ENCODE measurements at regions of chr1 and their contacts with region 1.

Region 1: DNA sequence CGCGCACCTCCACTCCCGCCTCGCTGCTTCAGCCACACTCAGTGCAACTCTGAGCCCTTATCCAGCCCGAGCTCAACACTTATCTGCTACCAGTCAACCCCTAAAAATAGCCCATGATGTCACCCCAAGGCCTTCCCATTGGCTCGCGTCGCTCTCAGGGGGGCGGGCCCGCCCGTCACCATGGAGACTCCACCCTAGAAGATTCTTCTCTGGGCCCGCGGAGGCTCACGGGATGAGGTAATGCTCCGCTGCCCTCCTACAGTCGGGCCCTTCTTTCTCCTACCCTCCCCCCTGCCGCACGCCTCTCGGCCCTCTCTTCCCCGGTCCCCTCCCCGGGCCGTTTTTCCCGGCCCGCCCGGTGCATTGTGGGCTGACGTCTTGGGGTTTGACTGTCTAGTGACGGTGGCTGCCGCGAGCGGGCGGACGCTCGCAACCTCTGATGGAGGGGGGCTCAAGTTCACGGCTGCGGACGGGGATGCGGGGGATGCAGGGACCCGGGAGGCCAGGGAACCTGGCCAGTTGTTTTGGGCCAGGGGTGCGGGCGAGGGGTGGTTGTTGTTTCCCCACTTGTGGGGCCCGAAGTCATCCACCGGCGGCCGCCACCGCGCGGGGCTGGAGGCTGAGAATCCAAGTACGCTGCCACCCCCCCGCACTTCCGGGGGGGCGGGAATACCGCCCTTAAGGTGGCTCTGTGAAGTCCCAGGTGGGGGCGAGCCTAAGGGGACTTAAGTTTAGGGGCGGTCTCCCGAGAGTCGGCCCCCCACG is at the start of gene JUN:
- DNase-seq: peak; percentile 100
- H3K4me3 ChIP-seq: peak within 1 kb of the TSS; percentile 77 to 91
- H3K27ac ChIP-seq: peak within 1 kb of the TSS; percentile 99 to 100
- H3K4me1 ChIP-seq: no peaks in the 10 kb centered on the region
- H3K27me3 ChIP-seq: no peaks in the 10 kb centered on the region
- CTCF ChIP-seq: peak in 3 of 4 experiments; percentile 36 to 50 (median 43)
- POLR2A ChIP-seq: peak; percentile 99
- total RNA-seq, gene JUN: 154 to 303 TPM

Region 2: GRCh38 chr1:58816072-58816746 is 32.0 kb after region 1 on chr1:
- intact Hi-C with region 1: loop called (anchors 5 kb)
- DNase-seq: peak; percentile 88
- H3K4me3 ChIP-seq: peak overlapping the region; percentile 49 to 59
- H3K27ac ChIP-seq: peak overlapping the region; percentile 90 to 93
- H3K4me1 ChIP-seq: peaks cover 19% of the 10 kb centered on the region
- H3K27me3 ChIP-seq: no peaks in the 10 kb centered on the region
- CTCF ChIP-seq: peak in 2 of 4 experiments; percentile 23 to 31
- POLR2A ChIP-seq: peak; percentile 37

Region 3: GRCh38 chr1:59025898-59026426 is 241.8 kb after region 1 on chr1:
- intact Hi-C with region 1: no loop called
- DNase-seq: no peak
- H3K4me3 ChIP-seq: no peak overlapping the region
- H3K27ac ChIP-seq: no peak overlapping the region
- H3K4me1 ChIP-seq: no peaks in the 10 kb centered on the region
- H3K27me3 ChIP-seq: no peaks in the 10 kb centered on the region
- CTCF ChIP-seq: no peak
- POLR2A ChIP-seq: no peak

Region 4: DNA sequence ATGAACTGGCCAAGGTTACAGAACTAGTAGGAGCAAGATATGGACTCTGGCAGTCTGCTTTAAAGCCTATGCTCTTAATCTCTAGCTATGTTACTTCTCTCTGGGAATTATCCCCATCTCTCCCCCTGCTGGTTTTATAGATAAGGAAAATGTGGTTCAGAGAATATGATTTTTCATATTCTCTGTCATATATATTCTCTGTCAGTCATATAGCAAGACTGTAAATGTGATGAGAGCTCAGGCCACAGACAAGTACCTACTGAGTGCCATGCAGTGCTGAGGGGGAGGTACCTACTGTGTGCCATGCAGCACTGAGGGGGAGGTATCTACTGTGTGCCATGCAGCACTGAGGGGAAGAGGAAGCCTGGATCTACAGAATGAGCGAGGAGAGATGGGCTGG is 292.4 kb after region 1 on chr1:
- intact Hi-C with region 1: loop called (anchors 5 kb)
- DNase-seq: no peak
- H3K4me3 ChIP-seq: no peak overlapping the region
- H3K27ac ChIP-seq: no peak overlapping the region
- H3K4me1 ChIP-seq: peaks cover 7% of the 10 kb centered on the region
- H3K27me3 ChIP-seq: no peaks in the 10 kb centered on the region
- CTCF ChIP-seq: peak in 3 of 4 experiments; percentile 11 to 45 (median 31)
- POLR2A ChIP-seq: no peak

Region 5: DNA sequence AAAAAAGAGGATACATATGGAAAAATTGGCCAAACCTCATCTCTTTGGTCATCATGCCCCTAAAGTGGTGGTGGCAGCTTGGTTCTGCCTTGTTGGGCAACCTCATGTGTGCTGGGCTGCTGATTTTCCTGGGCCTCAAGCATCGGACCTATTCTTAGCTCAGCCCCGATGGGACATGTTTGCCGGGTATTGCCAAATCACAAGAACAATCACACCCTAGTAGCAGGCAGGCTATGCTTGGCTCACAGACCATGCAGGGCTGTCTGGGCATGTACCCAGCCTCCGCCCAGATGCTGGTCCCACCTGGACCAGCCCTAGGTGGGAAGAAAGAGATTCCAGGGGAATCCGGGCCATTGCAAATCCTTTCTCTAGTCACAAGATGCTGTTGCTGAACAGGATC is 323.3 kb after region 1 on chr1:
- intact Hi-C with region 1: no loop called
- DNase-seq: peak; percentile 82
- H3K4me3 ChIP-seq: no peak overlapping the region
- H3K27ac ChIP-seq: peak overlapping the region; percentile 31 to 48
- H3K4me1 ChIP-seq: peaks cover 7% of the 10 kb centered on the region
- H3K27me3 ChIP-seq: no peaks in the 10 kb centered on the region
- CTCF ChIP-seq: no peak
- POLR2A ChIP-seq: no peak

Region 6: GRCh38 chr1:59296358-59297256 is 512.4 kb after region 1 on chr1 and contains the start of gene FGGY:
- intact Hi-C with region 1: loop called (anchors 1 kb)
- DNase-seq: peak; percentile 97
- H3K4me3 ChIP-seq: peak within 1 kb of the TSS; percentile 34 to 48
- H3K27ac ChIP-seq: peak within 1 kb of the TSS; percentile 89 to 91
- H3K4me1 ChIP-seq: no peaks in the 10 kb centered on the region
- H3K27me3 ChIP-seq: no peaks in the 10 kb centered on the region
- CTCF ChIP-seq: peak in 1 of 4 experiments; percentile 9
- POLR2A ChIP-seq: peak; percentile 84
- total RNA-seq, gene FGGY: 28.6 to 32.2 TPM

Region 7: DNA sequence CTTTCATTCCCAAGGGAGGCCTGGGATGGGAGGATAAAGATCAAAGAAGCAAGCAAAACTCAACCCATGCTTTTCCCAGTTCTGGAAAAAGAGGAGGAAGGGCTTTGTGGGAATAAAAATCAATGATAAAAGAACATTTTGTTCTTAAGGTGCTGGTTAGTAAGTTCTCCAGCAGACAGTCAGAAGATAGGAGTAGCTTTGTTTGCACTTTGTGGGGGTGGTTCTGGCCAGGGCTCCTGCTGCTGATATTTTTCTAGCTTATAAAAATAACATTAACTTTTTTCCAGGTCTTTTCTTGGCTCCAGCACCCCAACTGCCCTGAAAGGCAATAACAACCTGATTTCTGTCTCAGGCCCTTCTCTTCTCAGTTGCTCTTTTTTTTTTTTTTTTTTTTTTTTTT is 732.7 kb after region 1 on chr1:
- intact Hi-C with region 1: loop called (anchors 5 kb)
- DNase-seq: peak; percentile 51
- H3K4me3 ChIP-seq: no peak overlapping the region
- H3K27ac ChIP-seq: peak overlapping the region; percentile 59 to 74
- H3K4me1 ChIP-seq: no peaks in the 10 kb centered on the region
- H3K27me3 ChIP-seq: no peaks in the 10 kb centered on the region
- CTCF ChIP-seq: no peak
- POLR2A ChIP-seq: no peak

Region 8: GRCh38 chr1:59699227-59699847 is 915.2 kb after region 1 on chr1:
- intact Hi-C with region 1: loop called (anchors 2 kb)
- DNase-seq: no peak
- H3K4me3 ChIP-seq: no peak overlapping the region
- H3K27ac ChIP-seq: peak overlapping the region; percentile 58 to 64
- H3K4me1 ChIP-seq: no peaks in the 10 kb centered on the region
- H3K27me3 ChIP-seq: no peaks in the 10 kb centered on the region
- CTCF ChIP-seq: peak; percentile 90 to 94 (median 92)
- POLR2A ChIP-seq: no peak

Measured in prostate gland (tissue), 2 donors.